ENCODE measurements at regions of chr11 and their contacts with region 1.

Region 1: DNA sequence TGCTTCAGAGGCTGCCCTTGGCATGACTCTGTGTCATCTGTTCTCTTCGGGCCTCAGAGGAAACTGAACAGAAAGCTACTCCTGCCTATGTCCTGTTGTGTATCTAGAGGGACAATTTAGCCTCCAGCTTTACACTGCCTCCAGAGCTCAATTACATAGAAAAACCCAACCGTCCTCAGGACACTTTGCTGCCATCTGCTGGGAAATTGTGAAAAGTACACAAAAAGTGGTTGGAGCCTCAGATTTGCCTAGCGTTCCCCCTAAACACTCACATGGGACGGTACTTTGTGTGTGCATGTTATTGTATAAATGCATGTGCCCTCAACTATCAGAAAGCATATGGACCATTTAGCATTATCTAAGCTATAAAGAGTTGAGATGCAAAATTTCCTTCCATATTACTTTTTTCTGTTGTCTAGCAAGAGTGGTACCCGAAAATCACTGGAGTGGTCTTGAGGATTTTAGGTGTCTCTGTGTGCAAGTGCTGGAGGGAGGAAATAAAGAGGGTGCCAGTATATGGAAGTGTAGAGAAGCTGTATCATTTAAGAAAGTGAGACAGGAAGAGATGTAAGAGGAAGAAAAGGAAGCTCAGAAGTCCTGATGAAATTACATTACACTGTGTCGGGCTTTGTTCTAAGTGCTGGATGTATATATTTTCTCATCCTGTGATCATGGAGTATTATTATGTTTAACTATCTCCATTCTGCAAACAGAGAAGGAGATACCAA is 8.7 kb upstream of the MS4A4E start:
- DNase-seq: no peak
- ATAC-seq: peak; percentile 77
- H3K4me3 Mint-ChIP-seq: no peak overlapping the region
- H3K27ac Mint-ChIP-seq: no peak overlapping the region
- H3K4me1 Mint-ChIP-seq: peaks cover 4% of the 10 kb centered on the region; the same call in 1 of the 2 replicates
- H3K27me3 Mint-ChIP-seq: no peaks in the 10 kb centered on the region
- CTCF ChIP-seq: no peak; the same call in 1 of the 2 replicates

Region 2: GRCh38 chr11:60169264-60169915 is 82.3 kb before region 1 on chr11:
- CTCF ChIA-PET with region 1: interaction called, 11 read pairs
- POLR2A ChIA-PET with region 1: no interaction called
- DNase-seq: peak; percentile 28
- ATAC-seq: no peak
- H3K4me3 Mint-ChIP-seq: no peak overlapping the region
- H3K27ac Mint-ChIP-seq: no peak overlapping the region
- H3K4me1 Mint-ChIP-seq: peaks cover 4% of the 10 kb centered on the region; the same call in 1 of the 2 replicates
- H3K27me3 Mint-ChIP-seq: peaks cover 4% of the 10 kb centered on the region; the same call in 1 of the 2 replicates
- CTCF ChIP-seq: no peak

Region 3: GRCh38 chr11:60240662-60241061 is 11.0 kb before region 1 on chr11:
- CTCF ChIA-PET with region 1: no interaction called
- POLR2A ChIA-PET with region 1: no interaction called
- DNase-seq: no peak
- ATAC-seq: no peak
- H3K4me3 Mint-ChIP-seq: no peak overlapping the region
- H3K27ac Mint-ChIP-seq: no peak overlapping the region
- H3K4me1 Mint-ChIP-seq: no peaks in the 10 kb centered on the region
- H3K27me3 Mint-ChIP-seq: peaks cover 2% of the 10 kb centered on the region; the same call in 1 of the 2 replicates
- CTCF ChIP-seq: no peak